OCI-LY7 (cell line): ENCODE measurements at regions of chr2 and their contacts with region 1.

Region 1: DNA sequence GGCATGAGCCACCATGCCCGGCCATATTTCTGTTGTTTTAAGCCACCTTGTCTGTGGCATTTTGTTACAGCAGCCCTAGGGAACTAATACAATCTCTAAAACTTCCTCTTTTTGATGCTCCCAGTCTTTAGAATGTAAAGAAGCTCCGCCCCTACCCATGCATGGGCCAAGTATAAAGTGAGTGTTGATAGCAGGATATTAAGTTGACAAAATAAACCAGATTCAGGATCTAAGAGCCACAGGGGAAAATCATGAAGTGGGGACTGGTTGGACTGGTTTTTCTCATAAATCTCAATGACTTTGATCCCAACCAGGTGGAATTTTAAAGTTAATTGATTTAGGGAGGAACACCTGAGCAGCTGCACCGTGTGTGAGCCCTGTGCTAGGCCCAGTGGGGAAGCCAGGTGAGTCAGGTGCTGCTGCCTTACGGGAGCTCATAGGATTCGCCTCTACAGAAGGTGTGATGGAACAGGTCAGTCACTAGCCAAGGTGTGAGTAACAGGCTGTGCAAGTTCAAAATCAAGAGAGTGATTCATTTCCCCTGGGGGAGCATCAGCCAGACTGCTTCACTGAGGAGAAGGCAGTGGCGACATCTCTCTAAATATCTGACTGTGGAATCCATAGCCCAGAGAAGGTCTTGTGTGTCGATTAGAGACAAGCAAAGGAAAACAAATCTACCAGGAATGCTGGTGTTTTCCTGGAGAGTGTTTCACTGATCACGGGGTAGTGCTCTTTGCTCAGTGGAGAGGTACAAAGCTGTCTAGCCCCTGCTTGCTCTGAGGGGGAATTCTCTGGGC is 63.0 kb upstream of the MSH2 start:
- DNase-seq: no peak
- H3K4me3 ChIP-seq: no peak overlapping the region
- H3K27ac ChIP-seq: no peak overlapping the region
- H3K4me1 ChIP-seq: peaks cover 18% of the 10 kb centered on the region
- CTCF ChIP-seq: no peak

Region 2: DNA sequence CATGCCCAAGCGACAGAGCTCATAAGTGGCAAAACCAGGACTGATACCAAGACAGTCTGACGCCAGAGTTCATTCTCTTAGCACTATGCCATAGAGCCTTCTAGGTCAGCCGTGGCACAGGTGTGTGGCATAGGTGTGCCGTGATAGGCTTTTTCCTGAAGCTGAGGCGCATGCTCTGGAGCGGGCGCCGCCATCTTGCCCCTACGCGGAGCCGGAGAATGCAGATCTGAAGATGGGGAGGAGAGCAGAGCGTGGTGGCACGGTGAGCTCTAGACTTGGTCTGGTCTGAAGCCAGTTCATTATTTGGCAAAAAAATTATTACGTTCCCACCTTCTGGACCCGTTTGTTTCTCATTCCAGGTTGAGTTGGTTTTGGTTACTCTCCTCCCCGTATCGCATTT is 440.9 kb before region 1 on chr2:
- CTCF ChIA-PET with region 1: no interaction called
- POLR2A ChIA-PET with region 1: no interaction called
- intact Hi-C with region 1: no loop called
- DNase-seq: no peak
- H3K4me3 ChIP-seq: no peak overlapping the region
- H3K27ac ChIP-seq: no peak overlapping the region
- H3K4me1 ChIP-seq: no peaks in the 10 kb centered on the region
- CTCF ChIP-seq: no peak

Region 3: GRCh38 chr2:47811668-47812067 is 471.7 kb after region 1 on chr2:
- CTCF ChIA-PET with region 1: no interaction called
- POLR2A ChIA-PET with region 1: no interaction called
- intact Hi-C with region 1: loop called (anchors 5 kb)
- DNase-seq: no peak
- H3K4me3 ChIP-seq: no peak overlapping the region
- H3K27ac ChIP-seq: peak overlapping the region; percentile 0
- H3K4me1 ChIP-seq: peaks cover 5% of the 10 kb centered on the region
- CTCF ChIP-seq: no peak